B cell (primary cell): ENCODE measurements at regions of chr3 and their contacts with region 1.

Region 1: GRCh38 chr3:114152519-114153151 is 26.2 kb downstream of the DRD3 start:
- DNase-seq: peak; percentile 88
- ATAC-seq: peak; percentile 99
- H3K4me3 ChIP-seq: peak overlapping the region; percentile 15 to 61 (median 48)
- H3K4me3 Mint-ChIP-seq: peak overlapping the region; percentile 72
- H3K27ac ChIP-seq: no peak overlapping the region
- H3K27ac Mint-ChIP-seq: peak overlapping the region; percentile 47
- H3K4me1 ChIP-seq: peaks cover 3 to 7% of the 10 kb centered on the region in 2 donors
- H3K4me1 Mint-ChIP-seq: peaks cover 9% of the 10 kb centered on the region
- H3K27me3 ChIP-seq: no peaks in the 10 kb centered on the region
- H3K27me3 Mint-ChIP-seq: no peaks in the 10 kb centered on the region
- CTCF ChIP-seq: peak; percentile 98

Region 2: GRCh38 chr3:113890256-113890900 is 262.3 kb before region 1 on chr3:
- CTCF ChIA-PET with region 1: no interaction called
- POLR2A ChIA-PET with region 1: no interaction called
- intact Hi-C with region 1: no loop called
- DNase-seq: no peak
- ATAC-seq: no peak
- H3K4me3 ChIP-seq: no peak overlapping the region
- H3K4me3 Mint-ChIP-seq: no peak overlapping the region
- H3K27ac ChIP-seq: no peak overlapping the region
- H3K27ac Mint-ChIP-seq: no peak overlapping the region
- H3K4me1 ChIP-seq: no peaks in the 10 kb centered on the region
- H3K4me1 Mint-ChIP-seq: no peaks in the 10 kb centered on the region
- H3K27me3 ChIP-seq: no peaks in the 10 kb centered on the region
- H3K27me3 Mint-ChIP-seq: no peaks in the 10 kb centered on the region
- CTCF ChIP-seq: no peak

Region 3: DNA sequence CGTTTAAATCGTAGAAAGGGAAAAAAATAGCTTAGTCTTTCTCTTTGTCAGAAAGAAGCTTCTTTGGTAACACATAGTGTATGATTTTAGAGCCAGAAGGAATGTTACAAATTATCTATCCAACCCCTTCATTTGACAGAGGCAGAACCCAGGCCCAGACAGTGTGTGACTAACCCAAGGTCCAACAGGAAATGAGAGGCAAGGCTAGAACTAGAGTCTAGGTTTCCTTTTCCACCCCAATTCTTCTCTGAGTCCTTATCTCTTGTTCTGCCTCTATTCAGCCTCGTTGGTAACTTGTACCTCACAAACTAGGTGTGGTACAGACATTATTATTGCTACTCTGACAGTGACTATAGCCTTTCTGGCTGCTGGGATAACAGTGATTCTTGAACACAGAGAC is 56.8 kb before region 1 on chr3:
- CTCF ChIA-PET with region 1: no interaction called
- POLR2A ChIA-PET with region 1: no interaction called
- intact Hi-C with region 1: no loop called
- DNase-seq: no peak
- ATAC-seq: no peak
- H3K4me3 ChIP-seq: no peak overlapping the region
- H3K4me3 Mint-ChIP-seq: no peak overlapping the region
- H3K27ac ChIP-seq: no peak overlapping the region
- H3K27ac Mint-ChIP-seq: no peak overlapping the region
- H3K4me1 ChIP-seq: no peaks in the 10 kb centered on the region
- H3K4me1 Mint-ChIP-seq: no peaks in the 10 kb centered on the region
- H3K27me3 ChIP-seq: no peaks in the 10 kb centered on the region
- H3K27me3 Mint-ChIP-seq: peaks cover 7% of the 10 kb centered on the region
- CTCF ChIP-seq: no peak

Region 4: DNA sequence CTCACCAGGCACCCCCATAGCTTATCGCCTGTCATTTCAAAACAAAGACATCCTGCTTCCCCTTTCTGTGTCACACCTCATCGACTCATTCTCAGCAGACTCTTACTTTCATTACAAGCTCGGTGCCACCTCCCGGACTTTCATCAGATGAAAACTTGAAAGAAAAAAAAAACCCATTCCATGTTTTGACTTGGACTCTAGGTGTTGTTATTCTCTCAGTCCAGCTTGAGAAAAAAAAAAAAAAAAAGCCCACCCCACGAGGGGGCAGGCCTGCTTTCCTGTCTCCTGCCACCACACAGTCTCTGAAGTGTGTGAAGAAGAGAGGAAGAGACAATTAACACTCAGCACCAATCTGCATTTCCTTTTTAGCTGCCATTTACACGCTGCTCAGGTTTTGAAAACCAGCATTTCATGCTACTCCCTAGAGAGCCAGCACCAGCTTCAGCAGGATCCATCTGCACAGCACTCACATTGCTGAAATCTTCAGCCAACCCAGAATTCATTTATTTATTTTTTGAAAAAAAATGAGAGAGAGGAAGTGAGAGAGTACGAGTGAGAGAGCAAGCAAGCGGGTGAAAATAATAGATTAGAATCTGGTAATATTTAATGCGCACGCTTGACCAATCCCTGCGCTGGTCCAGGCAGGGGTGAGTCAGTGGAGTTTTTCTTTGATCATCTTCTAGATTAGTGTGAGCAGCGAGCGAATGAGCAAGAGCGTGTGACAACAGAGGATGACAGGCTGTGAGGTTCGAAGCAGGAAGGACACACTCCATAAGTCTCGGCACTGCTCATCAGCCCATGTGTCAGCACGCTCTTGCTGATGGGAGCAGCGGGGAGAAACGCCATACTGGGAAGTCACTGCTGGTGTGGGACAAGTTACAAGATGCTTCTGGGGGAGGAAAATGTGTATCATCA is 61.2 kb after region 1 on chr3:
- CTCF ChIA-PET with region 1: interaction called, 47 read pairs
- POLR2A ChIA-PET with region 1: interaction called, 4 read pairs
- intact Hi-C with region 1: loop called (anchors 1 kb)
- DNase-seq: peak; percentile 92
- ATAC-seq: peak; percentile 76
- H3K4me3 ChIP-seq: peak overlapping the region; percentile 42 to 76 (median 69)
- H3K4me3 Mint-ChIP-seq: no peak overlapping the region
- H3K27ac ChIP-seq: peak overlapping the region; percentile 95 to 98
- H3K27ac Mint-ChIP-seq: no peak overlapping the region
- H3K4me1 ChIP-seq: peaks cover 66 to 71% of the 10 kb centered on the region in 2 donors
- H3K4me1 Mint-ChIP-seq: peaks cover 28% of the 10 kb centered on the region
- H3K27me3 ChIP-seq: no peaks in the 10 kb centered on the region
- H3K27me3 Mint-ChIP-seq: no peaks in the 10 kb centered on the region
- CTCF ChIP-seq: no peak

Region 5: DNA sequence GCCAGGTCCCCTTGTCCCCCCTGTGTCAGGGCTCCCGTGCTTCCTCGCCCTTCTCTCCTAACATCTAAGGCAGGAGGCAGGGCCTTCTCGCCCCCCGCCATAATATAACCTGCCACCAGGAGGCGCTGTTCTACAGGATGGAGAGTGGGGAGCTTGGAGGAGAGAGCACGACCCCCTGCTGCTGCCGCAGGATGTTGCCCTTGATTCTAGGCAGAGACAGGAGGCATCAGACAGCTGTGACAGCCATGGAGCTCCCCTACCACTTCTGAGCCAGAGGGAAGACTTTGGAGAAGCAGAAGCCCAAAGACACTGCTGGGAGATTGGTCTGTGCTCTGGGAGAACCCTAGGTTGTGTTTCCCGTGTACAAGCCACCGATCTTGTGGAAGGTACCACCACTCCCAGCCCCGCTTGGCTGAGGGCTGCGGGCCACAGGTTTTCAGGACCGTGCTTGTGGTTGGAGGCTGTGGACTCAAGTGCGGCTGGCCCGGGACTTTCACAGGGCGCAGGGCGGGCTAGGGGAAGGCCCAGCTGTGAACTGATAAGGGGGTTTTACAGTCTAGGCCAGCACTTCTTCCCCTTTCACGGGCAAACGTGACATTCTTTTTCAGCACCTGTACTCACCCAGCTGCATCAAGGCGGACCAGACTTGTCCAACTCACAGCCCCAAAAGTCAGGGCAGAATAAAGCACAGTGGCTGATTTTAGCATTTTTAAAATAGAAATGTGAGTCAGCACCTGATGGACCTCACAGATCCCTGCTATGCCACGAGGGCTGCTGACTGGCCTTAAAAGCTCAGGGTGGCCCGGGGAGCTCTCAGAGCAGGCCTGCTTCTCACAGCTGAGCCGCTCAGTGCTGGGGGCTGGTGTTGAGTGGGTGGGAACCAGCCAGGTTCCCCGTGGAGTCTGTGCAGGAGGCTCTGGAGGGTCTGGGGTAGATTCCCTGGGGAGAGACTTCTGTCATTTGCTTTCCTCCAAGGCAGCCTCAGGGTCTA is 138.6 kb after region 1 on chr3:
- CTCF ChIA-PET with region 1: interaction called, 54 read pairs
- POLR2A ChIA-PET with region 1: no interaction called
- intact Hi-C with region 1: loop called (anchors 1 kb)
- DNase-seq: peak; percentile 94
- ATAC-seq: peak; percentile 86
- H3K4me3 ChIP-seq: peak overlapping the region in 2 of 5 experiments; percentile 33 to 40
- H3K4me3 Mint-ChIP-seq: peak overlapping the region; percentile 83
- H3K27ac ChIP-seq: peak overlapping the region; percentile 93
- H3K27ac Mint-ChIP-seq: peak overlapping the region; percentile 97
- H3K4me1 ChIP-seq: peaks cover 13 to 18% of the 10 kb centered on the region in 2 donors
- H3K4me1 Mint-ChIP-seq: peaks cover 30% of the 10 kb centered on the region
- H3K27me3 ChIP-seq: no peaks in the 10 kb centered on the region
- H3K27me3 Mint-ChIP-seq: no peaks in the 10 kb centered on the region
- CTCF ChIP-seq: peak; percentile 92

Region 6: DNA sequence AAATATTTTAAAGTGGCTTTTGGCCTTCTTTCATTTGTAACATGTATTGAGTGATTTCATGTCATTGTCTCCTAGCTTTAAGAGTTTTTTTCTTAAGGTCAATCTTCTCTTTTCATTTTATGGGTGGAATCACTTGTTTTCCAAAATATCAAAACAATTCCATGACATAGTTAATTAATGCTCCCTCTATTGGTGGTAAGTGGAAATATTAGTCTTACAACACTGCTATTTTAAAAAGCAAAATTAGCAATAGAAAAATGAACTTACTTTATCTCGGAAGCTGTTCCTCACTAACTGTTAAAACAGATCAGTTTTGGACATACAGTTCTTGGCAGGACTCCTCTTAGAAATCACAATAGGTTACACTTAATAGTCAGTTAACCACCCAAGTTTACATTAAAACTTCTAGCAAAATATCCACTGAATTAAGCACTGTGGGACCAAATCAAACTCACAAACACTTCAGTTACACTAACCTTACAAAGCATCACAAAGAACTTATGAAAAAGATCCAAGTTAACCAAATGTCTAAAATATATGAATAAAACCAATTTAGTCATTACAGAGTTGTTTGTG is 183.6 kb after region 1 on chr3:
- CTCF ChIA-PET with region 1: interaction called, 10 read pairs
- POLR2A ChIA-PET with region 1: no interaction called
- intact Hi-C with region 1: loop called (anchors 1 kb)
- DNase-seq: peak; percentile 25
- ATAC-seq: no peak
- H3K4me3 ChIP-seq: no peak overlapping the region
- H3K4me3 Mint-ChIP-seq: no peak overlapping the region
- H3K27ac ChIP-seq: no peak overlapping the region
- H3K27ac Mint-ChIP-seq: no peak overlapping the region
- H3K4me1 ChIP-seq: peaks cover 14% of the 10 kb centered on the region in 2 donors
- H3K4me1 Mint-ChIP-seq: peaks cover 31% of the 10 kb centered on the region
- H3K27me3 ChIP-seq: no peaks in the 10 kb centered on the region
- H3K27me3 Mint-ChIP-seq: no peaks in the 10 kb centered on the region
- CTCF ChIP-seq: peak; percentile 56

Region 7: GRCh38 chr3:114383875-114384557 is 231.4 kb after region 1 on chr3:
- CTCF ChIA-PET with region 1: interaction called, 5 read pairs
- POLR2A ChIA-PET with region 1: no interaction called
- intact Hi-C with region 1: loop called (anchors 1 kb)
- DNase-seq: peak; percentile 73
- ATAC-seq: peak; percentile 91
- H3K4me3 ChIP-seq: peak overlapping the region in 4 of 5 experiments; percentile 26 to 58 (median 45)
- H3K4me3 Mint-ChIP-seq: peak overlapping the region; percentile 75
- H3K27ac ChIP-seq: peak overlapping the region in 1 of 2 donors; percentile 67
- H3K27ac Mint-ChIP-seq: peak overlapping the region; percentile 38
- H3K4me1 ChIP-seq: peaks cover 4 to 11% of the 10 kb centered on the region in 2 donors
- H3K4me1 Mint-ChIP-seq: peaks cover 2% of the 10 kb centered on the region
- H3K27me3 ChIP-seq: no peaks in the 10 kb centered on the region
- H3K27me3 Mint-ChIP-seq: no peaks in the 10 kb centered on the region
- CTCF ChIP-seq: peak; percentile 92

Region 8: GRCh38 chr3:114706591-114707232 is 554.1 kb after region 1 on chr3:
- CTCF ChIA-PET with region 1: no interaction called
- POLR2A ChIA-PET with region 1: no interaction called
- intact Hi-C with region 1: no loop called
- DNase-seq: no peak
- ATAC-seq: no peak
- H3K4me3 ChIP-seq: no peak overlapping the region
- H3K4me3 Mint-ChIP-seq: no peak overlapping the region
- H3K27ac ChIP-seq: no peak overlapping the region
- H3K27ac Mint-ChIP-seq: no peak overlapping the region
- H3K4me1 ChIP-seq: no peaks in the 10 kb centered on the region
- H3K4me1 Mint-ChIP-seq: peaks cover 10% of the 10 kb centered on the region
- H3K27me3 ChIP-seq: no peaks in the 10 kb centered on the region
- H3K27me3 Mint-ChIP-seq: no peaks in the 10 kb centered on the region
- CTCF ChIP-seq: no peak

Region 9: GRCh38 chr3:115819785-115820384 is 1667.2 kb after region 1 on chr3:
- CTCF ChIA-PET with region 1: no interaction called
- POLR2A ChIA-PET with region 1: no interaction called
- intact Hi-C with region 1: loop called (anchors 10 kb)
- DNase-seq: peak; percentile 84
- ATAC-seq: peak; percentile 90
- H3K4me3 ChIP-seq: no peak overlapping the region
- H3K4me3 Mint-ChIP-seq: no peak overlapping the region
- H3K27ac ChIP-seq: no peak overlapping the region
- H3K27ac Mint-ChIP-seq: no peak overlapping the region
- H3K4me1 ChIP-seq: no peaks in the 10 kb centered on the region
- H3K4me1 Mint-ChIP-seq: no peaks in the 10 kb centered on the region
- H3K27me3 ChIP-seq: no peaks in the 10 kb centered on the region
- H3K27me3 Mint-ChIP-seq: no peaks in the 10 kb centered on the region
- CTCF ChIP-seq: peak; percentile 99